Activated CD4-positive, alpha-beta memory T cell treated with anti-CD3 and anti-CD28 coated beads for 36 hours (primary cell): ENCODE measurements at regions of chr18 and their contacts with region 1.

Region 1: DNA sequence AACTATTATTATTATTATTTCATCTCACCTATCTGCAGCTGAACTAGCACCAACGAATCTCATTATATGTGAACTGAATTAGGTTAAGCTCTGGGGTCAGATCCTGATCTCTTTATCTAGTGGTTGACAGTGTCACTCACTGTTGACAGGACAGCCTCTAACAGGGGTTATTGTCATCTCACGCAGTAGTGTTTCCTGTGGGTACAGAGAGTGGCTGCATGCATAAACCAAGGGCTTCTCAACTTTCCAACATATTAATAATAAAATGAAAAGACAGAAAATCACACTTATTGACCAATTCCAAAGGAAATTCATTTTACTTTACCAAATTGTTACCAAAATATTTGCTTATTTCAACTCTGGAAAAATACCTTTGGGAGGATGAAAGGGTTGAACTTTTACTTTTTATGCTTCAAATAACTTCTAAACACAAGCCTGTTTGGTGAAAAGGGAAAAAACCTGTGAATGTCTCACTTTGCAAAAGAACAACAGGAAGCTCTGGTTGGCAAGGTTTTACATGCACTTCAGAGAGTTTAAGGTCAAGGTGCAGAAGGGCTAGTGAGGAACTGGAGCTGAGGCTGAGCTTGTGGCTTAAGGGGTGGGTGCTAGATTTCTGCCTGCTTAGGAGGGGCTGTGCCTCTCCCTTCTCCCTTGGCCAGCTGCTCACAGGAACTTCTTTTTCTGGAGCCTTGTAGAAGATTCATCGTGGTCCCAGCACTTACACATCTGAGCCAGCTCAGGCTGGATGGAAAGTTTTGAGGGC is 72.6 kb downstream of the CTAGE1 start:
- DNase-seq: no peak
- H3K4me3 Mint-ChIP-seq: no peak overlapping the region
- H3K27ac Mint-ChIP-seq: peak overlapping the region; percentile 10
- H3K4me1 Mint-ChIP-seq: peaks cover 27% of the 10 kb centered on the region
- H3K27me3 Mint-ChIP-seq: peaks cover 21% of the 10 kb centered on the region

Region 2: GRCh38 chr18:22282311-22283112 is 62.6 kb before region 1 on chr18:
- CTCF ChIA-PET with region 1: no interaction called
- POLR2A ChIA-PET with region 1: no interaction called
- intact Hi-C with region 1: loop called (anchors 2 kb)
- DNase-seq: peak; percentile 14
- H3K4me3 Mint-ChIP-seq: no peak overlapping the region
- H3K27ac Mint-ChIP-seq: peak overlapping the region; percentile 73
- H3K4me1 Mint-ChIP-seq: peaks cover 9% of the 10 kb centered on the region
- H3K27me3 Mint-ChIP-seq: no peaks in the 10 kb centered on the region

Region 3: DNA sequence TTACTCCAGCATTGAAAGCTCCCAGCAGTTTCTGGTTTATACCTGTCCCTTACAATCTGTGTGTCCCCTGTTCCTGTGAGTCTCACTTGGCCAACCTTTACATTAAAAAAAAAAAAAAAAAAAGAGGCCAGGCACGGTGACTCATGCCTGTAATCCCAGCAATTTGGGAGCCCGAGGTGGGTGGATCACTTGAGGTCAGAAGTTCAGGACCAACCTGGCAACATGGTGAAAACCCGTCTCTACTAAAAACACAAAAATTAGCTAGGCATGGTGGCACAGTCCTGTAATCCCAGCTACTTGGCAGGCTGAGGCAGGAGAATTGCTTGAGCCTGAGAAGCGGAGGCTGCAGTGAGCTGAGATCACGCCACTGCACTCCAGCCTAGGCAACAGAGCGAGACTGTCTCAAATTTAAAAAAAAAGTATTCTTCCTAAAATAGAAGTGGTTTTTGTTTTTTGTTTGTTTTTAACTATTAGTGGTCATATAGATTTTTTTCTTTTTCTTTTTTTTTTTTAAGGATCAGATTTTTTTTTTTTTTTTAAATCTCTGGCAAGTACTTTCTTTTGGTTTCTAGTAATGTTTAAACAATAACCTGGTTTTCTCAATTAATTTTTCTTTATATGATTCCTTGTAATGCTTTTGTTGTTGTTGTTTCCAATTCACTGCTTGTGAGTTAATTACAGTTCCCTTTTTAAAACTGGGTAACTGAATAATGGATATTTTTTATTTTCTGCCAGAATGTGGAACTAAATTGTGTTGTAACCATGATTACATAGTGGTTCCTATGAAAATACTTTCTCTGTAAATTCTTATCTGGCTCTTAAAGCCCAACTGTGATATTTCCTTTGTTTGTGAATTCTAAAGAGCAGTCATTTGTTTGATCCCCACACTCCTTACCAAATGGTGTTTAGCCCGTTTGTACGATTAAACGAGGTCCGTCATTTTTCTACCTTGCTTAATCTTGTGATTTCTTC is 44.1 kb before region 1 on chr18:
- CTCF ChIA-PET with region 1: no interaction called
- POLR2A ChIA-PET with region 1: no interaction called
- intact Hi-C with region 1: no loop called
- DNase-seq: no peak
- H3K4me3 Mint-ChIP-seq: no peak overlapping the region
- H3K27ac Mint-ChIP-seq: no peak overlapping the region
- H3K4me1 Mint-ChIP-seq: no peaks in the 10 kb centered on the region
- H3K27me3 Mint-ChIP-seq: peaks cover 2% of the 10 kb centered on the region

Region 4: GRCh38 chr18:22355598-22355997 is 10.5 kb after region 1 on chr18:
- CTCF ChIA-PET with region 1: no interaction called
- POLR2A ChIA-PET with region 1: no interaction called
- intact Hi-C with region 1: no loop called
- DNase-seq: no peak
- H3K4me3 Mint-ChIP-seq: no peak overlapping the region
- H3K27ac Mint-ChIP-seq: no peak overlapping the region
- H3K4me1 Mint-ChIP-seq: no peaks in the 10 kb centered on the region
- H3K27me3 Mint-ChIP-seq: no peaks in the 10 kb centered on the region

Region 5: GRCh38 chr18:22370414-22370813 is 25.3 kb after region 1 on chr18:
- CTCF ChIA-PET with region 1: no interaction called
- POLR2A ChIA-PET with region 1: no interaction called
- intact Hi-C with region 1: no loop called
- DNase-seq: no peak
- H3K4me3 Mint-ChIP-seq: no peak overlapping the region
- H3K27ac Mint-ChIP-seq: no peak overlapping the region
- H3K4me1 Mint-ChIP-seq: no peaks in the 10 kb centered on the region
- H3K27me3 Mint-ChIP-seq: no peaks in the 10 kb centered on the region